Uterus (tissue), 4 donors: ENCODE measurements at regions of chr1 and their contacts with region 1.

Region 1: DNA sequence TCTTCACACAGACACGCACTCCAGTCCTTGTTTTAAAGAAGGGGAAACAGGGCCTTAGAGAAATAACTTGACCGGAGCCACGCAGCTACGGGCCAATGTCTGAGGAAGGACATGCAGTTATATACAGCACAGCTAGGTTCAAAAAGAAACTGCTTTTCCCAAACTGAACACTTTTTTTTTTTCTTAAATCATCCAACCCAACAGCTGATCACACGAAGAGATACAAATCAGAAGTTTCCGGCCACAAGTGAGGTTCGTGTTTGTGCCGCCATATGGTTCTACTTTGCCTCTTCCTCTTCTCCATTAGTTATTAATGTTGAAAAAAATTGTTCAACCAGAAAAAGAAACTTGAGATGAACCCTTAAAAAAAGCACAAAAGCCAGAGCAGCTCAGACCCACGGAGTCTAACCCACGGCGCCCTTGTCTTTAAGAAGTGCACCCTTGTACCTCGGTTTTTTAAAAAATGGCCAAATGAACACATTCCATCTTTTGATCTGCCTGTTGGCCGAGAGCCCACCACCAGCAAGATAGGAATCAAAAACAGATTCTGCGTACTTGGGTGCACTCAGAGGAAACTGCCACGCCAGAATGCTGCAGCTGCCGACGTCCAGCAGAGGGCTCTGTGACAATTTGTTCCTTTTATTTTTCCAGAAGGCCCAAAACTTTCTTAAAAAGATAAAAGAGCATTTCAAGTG is 78.9 kb downstream of the SLC66A1 start:
- DNase-seq: peak; percentile 69 to 73
- H3K4me3 ChIP-seq: peak overlapping the region in 1 of 2 donors; percentile 16
- H3K27ac ChIP-seq: peak overlapping the region; percentile 69 to 84
- H3K4me1 ChIP-seq: peaks cover 4 to 28% of the 10 kb centered on the region in 2 donors
- H3K27me3 ChIP-seq: no peaks in the 10 kb centered on the region
- CTCF ChIP-seq: peak; percentile 68 to 90 (median 84)
- POLR2A ChIP-seq: no peak

Region 2: GRCh38 chr1:19341201-19342072 is 49.6 kb before region 1 on chr1:
- intact Hi-C with region 1: loop called (anchors 10 kb)
- DNase-seq: peak; percentile 77
- H3K4me3 ChIP-seq: no peak overlapping the region
- H3K27ac ChIP-seq: peak overlapping the region; percentile 53 to 54
- H3K4me1 ChIP-seq: peaks cover 0 to 5% of the 10 kb centered on the region in 2 donors
- H3K27me3 ChIP-seq: no peaks in the 10 kb centered on the region
- CTCF ChIP-seq: peak; percentile 57 to 87 (median 76)
- POLR2A ChIP-seq: no peak

Region 3: DNA sequence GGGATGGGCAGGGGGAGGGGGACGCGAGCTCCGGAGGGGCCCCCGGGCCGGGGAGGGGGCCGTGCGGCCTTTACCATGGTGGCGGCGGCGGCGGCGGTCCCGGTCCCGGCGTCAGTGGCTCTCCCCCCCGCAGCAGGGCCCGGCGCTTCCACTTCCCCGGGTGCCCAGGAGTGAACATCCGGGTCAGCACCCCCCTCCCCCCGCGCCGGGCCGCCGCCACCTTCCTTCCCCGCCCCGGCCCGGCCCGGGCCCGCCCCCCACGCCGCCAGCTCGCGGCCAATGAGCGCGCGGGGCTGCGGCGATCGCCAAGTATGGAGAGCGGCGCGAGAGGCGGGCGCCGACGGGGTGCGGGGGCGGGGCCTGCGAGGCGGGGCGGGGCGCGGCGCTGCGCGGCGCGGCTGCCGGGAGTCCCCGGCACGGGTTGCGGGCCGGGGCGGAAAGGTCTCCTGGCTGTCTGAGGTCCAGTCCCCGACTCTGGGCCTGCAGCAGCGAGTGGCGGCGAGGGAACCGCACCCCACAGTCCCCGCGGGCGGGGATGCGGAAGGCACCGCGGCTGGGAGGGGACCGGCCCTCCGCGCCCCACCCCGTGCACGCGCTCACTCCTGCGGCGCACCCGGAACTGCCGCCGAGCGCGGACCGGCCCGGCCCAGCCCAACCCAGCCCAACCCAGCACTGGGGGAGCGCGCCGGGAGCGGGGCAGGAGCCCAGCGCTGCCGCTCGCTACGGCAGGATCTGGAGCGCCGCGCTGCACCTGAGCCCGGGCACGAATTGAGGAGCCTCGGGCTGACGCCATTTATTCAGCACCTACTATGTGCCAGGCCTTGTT is 94.5 kb after region 1 on chr1 and contains the start of gene CAPZB:
- intact Hi-C with region 1: loop called (anchors 10 kb)
- DNase-seq: peak; percentile 94 to 96
- H3K4me3 ChIP-seq: peak within 1 kb of the TSS; percentile 78 to 99
- H3K27ac ChIP-seq: peak within 1 kb of the TSS; percentile 96 to 100
- H3K4me1 ChIP-seq: peaks cover 13 to 38% of the 10 kb centered on the region in 2 donors
- H3K27me3 ChIP-seq: no peaks in the 10 kb centered on the region
- CTCF ChIP-seq: peak in 2 of 4 experiments; percentile 8 to 36
- POLR2A ChIP-seq: peak; percentile 82 to 95
- total RNA-seq, gene CAPZB: 94.4 to 281 (median 141) TPM

Region 4: GRCh38 chr1:19643602-19644394 is 252.8 kb after region 1 on chr1 and contains the start of gene NBL1:
- intact Hi-C with region 1: loop called (anchors 5 kb)
- DNase-seq: peak; percentile 78 to 83
- H3K4me3 ChIP-seq: peak within 1 kb of the TSS; percentile 71 to 89
- H3K27ac ChIP-seq: peak within 1 kb of the TSS; percentile 96 to 97
- H3K4me1 ChIP-seq: peaks cover 0 to 19% of the 10 kb centered on the region in 2 donors
- H3K27me3 ChIP-seq: no peaks in the 10 kb centered on the region
- CTCF ChIP-seq: peak in 3 of 4 experiments; percentile 2 to 38 (median 7)
- POLR2A ChIP-seq: peak; percentile 49 to 75
- total RNA-seq, gene NBL1: 54.1 to 222 (median 71.1) TPM